Heart left ventricle (tissue), 16 donors: ENCODE measurements at regions of chr5 and their contacts with region 1.

Region 1: DNA sequence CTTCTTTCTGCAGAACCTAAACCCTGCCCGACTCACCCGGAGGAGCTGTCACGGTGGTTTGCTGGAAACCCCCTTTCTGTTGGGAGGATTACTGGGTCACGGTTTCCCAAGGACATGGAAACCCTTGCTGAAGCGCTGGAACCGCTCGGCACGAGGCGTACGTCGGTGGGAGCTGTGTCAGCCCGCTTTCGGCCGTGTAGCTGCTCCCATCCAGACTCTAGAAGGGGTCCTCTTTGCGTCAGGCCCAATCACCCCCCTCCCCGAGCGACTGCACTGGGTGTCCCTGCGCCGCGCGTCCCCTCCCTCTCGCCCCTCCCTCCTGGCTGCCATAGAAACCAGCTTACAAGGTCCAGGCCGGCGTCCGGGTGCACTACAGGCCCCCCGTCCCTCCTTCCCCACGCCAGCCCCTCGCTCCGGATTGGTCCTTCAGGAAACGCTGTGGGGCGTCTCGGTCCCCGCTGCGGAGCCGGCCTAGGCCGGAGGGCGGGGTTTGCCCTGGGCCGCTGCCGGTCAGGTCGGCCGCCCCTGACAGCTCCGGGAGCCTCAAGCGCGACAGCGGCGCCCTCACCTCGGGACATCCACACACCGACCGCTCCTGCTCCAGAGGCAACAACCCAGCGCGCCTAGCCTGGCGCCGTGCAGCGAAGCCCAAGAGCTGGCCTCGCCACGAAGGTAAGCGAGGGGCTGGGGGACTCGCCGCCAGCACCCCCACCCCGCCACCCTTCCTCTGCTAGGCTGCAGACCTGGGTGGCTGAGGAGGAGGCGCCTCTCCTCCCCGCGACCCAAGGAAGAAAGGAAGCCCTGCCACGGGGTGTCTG is at the start of gene NIM1K:
- DNase-seq: peak; percentile 64 to 80 (median 72)
- ATAC-seq: peak; percentile 70 to 93 (median 89)
- H3K4me3 ChIP-seq: peak within 1 kb of the TSS; percentile 33 to 71 (median 61)
- H3K27ac ChIP-seq: peak within 1 kb of the TSS in 3 of 12 donors; percentile 14 to 40 (median 37)
- H3K4me1 ChIP-seq: peaks cover 0 to 30% (median 17%) of the 10 kb centered on the region in 12 donors
- H3K27me3 ChIP-seq: peaks cover 0 to 19% (median 0%) of the 10 kb centered on the region in 9 donors
- CTCF ChIP-seq: no peak
- POLR2A ChIP-seq: no peak
- total RNA-seq, gene NIM1K: 0.16 to 1.4 (median 0.45) TPM in 7 of 9 donors, not detected in the others

Region 2: GRCh38 chr5:43120720-43121564 is 71.0 kb before region 1 on chr5 and contains the start of gene ZNF131:
- intact Hi-C with region 1: loop called in 1 of 10 experiments (anchors 5 kb)
- DNase-seq: peak; percentile 96 to 98 (median 96)
- ATAC-seq: peak; percentile 98 to 99 (median 98)
- H3K4me3 ChIP-seq: peak within 1 kb of the TSS; percentile 25 to 97 (median 82)
- H3K27ac ChIP-seq: peak within 1 kb of the TSS; percentile 86 to 100 (median 98)
- H3K4me1 ChIP-seq: peaks cover 4 to 34% (median 22%) of the 10 kb centered on the region in 12 donors
- H3K27me3 ChIP-seq: no peaks in the 10 kb centered on the region
- CTCF ChIP-seq: no peak
- POLR2A ChIP-seq: peak in 1 of 2 donors; percentile 7
- total RNA-seq, gene ZNF131: 10.9 to 21.6 (median 13.3) TPM

Region 3: DNA sequence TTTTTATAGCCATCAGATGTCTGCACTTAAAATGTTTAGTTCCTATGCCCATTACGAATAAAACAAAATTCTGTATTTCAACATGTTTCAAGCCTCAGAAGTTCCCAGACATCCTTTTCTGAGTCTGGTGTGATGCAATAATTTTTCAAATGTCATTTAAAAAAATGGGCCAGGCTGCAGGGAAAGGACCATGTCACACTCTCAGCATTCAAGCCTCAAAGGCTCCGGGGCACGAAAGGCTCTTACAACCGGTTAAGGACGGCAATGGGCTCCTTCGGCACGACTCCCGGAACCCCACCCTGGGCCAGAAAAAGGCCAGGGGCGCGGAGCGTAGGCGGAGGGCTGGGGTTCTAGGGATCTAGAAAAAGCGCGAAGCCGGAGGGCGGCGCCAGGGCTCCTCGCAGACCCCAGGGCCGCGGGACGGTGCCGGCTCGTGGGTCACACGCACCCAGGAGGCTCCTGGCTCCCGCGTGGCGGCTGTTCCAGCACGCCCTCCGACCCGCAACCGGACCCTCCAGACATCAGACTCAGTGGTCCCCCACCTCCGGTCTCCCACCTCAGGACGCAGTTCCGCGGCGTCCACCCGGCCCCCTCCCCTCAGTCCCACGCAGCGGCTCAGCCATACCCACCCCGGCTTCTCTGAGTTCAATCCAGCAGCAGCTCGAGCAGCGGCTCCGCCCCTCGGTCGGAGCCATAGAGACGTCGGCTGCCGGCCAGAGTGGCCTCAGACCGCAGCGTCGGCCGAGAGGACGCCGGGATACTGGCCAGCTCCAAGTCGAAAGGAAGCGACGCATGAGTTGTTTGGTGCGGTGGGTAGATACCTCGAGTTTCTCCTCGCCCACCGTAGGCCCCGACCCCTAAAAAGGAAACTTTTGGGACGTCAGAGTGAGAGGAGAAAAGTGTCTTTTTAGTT is 291.5 kb after region 1 on chr5 and contains the start of gene TMEM267:
- intact Hi-C with region 1: no loop called
- DNase-seq: peak; percentile 92 to 97 (median 95)
- ATAC-seq: peak; percentile 98 to 99 (median 98)
- H3K4me3 ChIP-seq: peak within 1 kb of the TSS; percentile 72 to 93 (median 88)
- H3K27ac ChIP-seq: peak within 1 kb of the TSS; percentile 92 to 99 (median 96)
- H3K4me1 ChIP-seq: peaks cover 0 to 32% (median 15%) of the 10 kb centered on the region in 12 donors
- H3K27me3 ChIP-seq: no peaks in the 10 kb centered on the region
- CTCF ChIP-seq: no peak
- POLR2A ChIP-seq: peak in 1 of 2 donors; percentile 62
- total RNA-seq, gene TMEM267: 3.8 to 9.5 (median 7.2) TPM